Ovary (tissue), 10 donors: ENCODE measurements at regions of chr20 and their contacts with region 1.

Region 1: DNA sequence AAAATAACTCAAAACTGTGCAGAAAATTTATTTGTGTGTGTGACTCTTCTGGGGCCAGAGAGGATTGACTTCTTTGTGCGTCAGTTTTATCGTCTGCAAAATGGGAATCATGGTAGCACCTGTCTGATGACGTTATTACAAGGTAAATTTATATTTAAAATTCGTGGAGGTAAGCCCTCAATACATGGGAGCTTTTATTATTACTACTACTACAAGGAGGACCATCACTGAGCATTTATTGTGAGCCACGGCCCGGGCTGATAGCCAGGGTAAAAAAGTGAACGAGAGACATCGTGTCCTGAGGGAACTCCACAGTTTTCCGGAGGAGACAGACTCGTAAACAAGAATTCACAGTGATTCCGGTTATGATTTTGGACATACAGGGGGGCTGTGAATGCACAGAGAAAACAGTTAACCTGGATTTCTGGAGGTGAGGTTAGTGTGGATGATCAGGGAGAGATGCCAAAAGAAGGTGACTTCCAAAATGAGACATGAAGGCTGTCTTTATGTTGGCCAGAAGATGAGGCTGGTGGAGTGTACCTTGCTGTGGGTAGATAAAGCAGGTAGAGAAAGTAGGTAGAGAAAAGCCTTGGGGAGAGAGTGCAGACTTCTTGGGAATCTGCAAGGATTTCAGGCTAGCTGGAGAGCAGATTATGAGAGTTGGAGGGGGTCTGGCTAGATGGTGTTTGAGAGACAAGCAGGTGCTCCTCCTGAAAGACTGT is 10.6 kb upstream of the SERINC3 start:
- DNase-seq: peak in 4 of 5 donors; percentile 28 to 54 (median 40)
- H3K4me3 ChIP-seq: peak overlapping the region; percentile 80
- H3K27ac ChIP-seq: peak overlapping the region in 1 of 2 donors; percentile 50
- H3K4me1 ChIP-seq: peaks cover 5% of the 10 kb centered on the region
- H3K27me3 ChIP-seq: no peaks in the 10 kb centered on the region
- CTCF ChIP-seq: no peak
- EP300 ChIP-seq: no peak
- POLR2A ChIP-seq: no peak

Region 2: GRCh38 chr20:44502968-44503367 is 29.5 kb before region 1 on chr20:
- intact Hi-C with region 1: loop called in 1 of 4 experiments (anchors 1 kb)
- DNase-seq: no peak
- H3K4me3 ChIP-seq: no peak overlapping the region
- H3K27ac ChIP-seq: no peak overlapping the region
- H3K4me1 ChIP-seq: no peaks in the 10 kb centered on the region
- H3K27me3 ChIP-seq: no peaks in the 10 kb centered on the region
- CTCF ChIP-seq: no peak
- EP300 ChIP-seq: no peak
- POLR2A ChIP-seq: no peak

Region 3: DNA sequence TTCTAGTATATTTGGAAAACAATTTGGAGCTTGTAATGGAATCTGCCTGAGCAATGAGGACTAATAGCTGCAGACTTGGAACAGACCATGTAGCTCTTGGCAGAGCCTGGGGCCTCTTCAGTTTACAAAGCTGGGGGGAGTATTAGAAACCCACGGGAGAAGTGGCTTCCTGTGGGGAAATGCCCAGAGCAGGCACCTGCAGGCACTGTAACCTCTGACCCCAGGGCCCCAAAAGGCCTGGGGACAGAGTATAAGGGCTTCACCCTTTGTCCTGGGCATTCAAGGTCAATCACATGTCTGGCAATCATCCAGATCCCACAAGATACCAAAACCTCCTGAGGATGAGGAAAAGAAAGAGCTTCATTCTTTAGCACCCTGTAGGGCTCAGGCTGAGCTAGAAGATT is 69.4 kb after region 1 on chr20:
- intact Hi-C with region 1: loop called in 2 of 4 experiments (anchors 5 kb)
- DNase-seq: peak; percentile 78 to 84 (median 81)
- H3K4me3 ChIP-seq: no peak overlapping the region
- H3K27ac ChIP-seq: peak overlapping the region; percentile 50 to 85
- H3K4me1 ChIP-seq: peaks cover 28% of the 10 kb centered on the region
- H3K27me3 ChIP-seq: no peaks in the 10 kb centered on the region
- CTCF ChIP-seq: no peak
- EP300 ChIP-seq: no peak
- POLR2A ChIP-seq: no peak